ENCODE measurements at regions of chr14 and their contacts with region 1.

Region 1: GRCh38 chr14:58637391-58638230 is at the start of gene DACT1:
- DNase-seq: peak; percentile 87 to 93
- ATAC-seq: peak; percentile 85
- H3K4me3 ChIP-seq: peak within 1 kb of the TSS; percentile 75 to 93
- H3K27ac ChIP-seq: peak within 1 kb of the TSS; percentile 96 to 100
- H3K4me1 ChIP-seq: peaks cover 3% of the 10 kb centered on the region in 2 donors
- H3K27me3 ChIP-seq: no peaks in the 10 kb centered on the region
- total RNA-seq, gene DACT1: 33.6 to 43.6 TPM

Region 2: DNA sequence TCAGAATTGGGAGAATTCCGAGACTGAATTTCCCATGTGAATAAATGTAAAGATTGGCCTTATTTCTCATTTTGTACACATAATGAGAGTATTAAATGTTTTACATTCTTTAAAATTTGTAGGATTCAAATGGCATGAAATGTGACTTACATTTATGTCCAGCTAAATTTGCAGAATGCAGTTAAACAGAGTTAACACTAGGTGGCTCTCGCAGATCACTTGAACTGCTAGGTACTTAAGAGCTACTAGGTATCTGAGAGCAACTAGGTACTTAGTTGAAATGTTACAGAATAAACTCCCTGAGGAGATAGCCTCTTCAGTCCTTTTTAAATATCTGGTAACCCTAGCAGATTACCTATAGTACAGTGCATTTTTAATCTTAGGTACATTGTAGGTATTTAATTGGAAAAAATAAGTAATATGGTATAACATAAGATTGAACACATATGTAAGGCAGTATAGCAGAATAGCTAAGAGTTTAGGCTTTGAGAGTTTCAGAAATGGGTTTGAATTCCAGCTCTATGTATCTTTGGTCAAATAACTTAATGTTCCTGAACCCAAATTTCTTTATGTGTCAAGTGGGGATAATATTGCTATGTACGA is 136.3 kb before region 1 on chr14:
- intact Hi-C with region 1: loop called (anchors 5 kb)
- DNase-seq: no peak
- ATAC-seq: no peak
- H3K4me3 ChIP-seq: no peak overlapping the region
- H3K27ac ChIP-seq: no peak overlapping the region
- H3K4me1 ChIP-seq: no peaks in the 10 kb centered on the region
- H3K27me3 ChIP-seq: no peaks in the 10 kb centered on the region

Region 3: GRCh38 chr14:58540749-58541632 is 96.6 kb before region 1 on chr14:
- intact Hi-C with region 1: loop called (anchors 2 to 10 kb)
- DNase-seq: no peak
- ATAC-seq: no peak
- H3K4me3 ChIP-seq: no peak overlapping the region
- H3K27ac ChIP-seq: peak overlapping the region in 1 of 2 donors; percentile 84
- H3K4me1 ChIP-seq: peaks cover 0 to 1% of the 10 kb centered on the region in 2 donors
- H3K27me3 ChIP-seq: no peaks in the 10 kb centered on the region

Region 4: DNA sequence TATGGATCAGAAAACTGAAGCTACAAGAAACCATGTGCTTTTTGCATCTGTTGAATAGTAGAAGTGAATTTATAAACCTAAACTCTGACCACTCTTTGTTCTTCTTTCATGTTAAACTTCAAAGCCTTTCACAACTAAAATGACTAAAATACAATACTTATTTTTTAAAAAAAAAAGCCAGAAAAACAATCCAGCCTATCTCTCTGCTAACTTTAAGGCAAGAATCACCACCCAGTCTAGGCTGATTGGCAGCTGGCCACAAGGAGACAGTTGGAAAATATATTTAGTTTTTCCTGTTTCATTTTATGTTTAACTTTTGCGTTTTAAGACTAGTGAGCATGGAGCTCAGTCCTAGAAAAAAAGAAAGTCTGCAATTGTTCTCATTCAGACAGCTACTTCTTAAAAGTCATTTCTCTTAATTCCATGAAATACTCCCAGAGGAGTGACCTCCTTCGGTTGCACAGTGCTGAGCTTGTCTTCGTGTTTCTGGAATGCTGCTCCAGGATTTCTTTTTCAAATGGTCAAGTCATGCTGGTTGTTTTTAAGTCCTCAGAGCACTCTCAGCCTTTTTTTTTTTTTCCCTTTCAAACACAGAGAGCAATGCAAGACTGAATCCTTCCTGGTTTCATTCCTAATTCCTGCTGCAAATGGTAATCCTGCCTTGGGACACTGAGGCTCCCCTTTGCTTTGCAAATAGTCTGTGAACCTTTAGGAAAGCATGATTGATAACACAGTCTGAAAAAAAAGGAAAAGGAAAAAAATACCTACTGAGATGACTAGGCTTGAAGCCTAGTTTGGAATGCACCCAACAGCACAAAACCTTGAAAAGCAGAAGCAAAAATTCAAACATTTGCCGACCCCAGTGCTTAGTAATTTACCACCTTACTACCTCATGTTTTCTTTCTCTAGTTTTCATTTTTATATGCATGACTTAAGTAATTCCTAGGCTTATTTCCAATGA is 317.6 kb after region 1 on chr14:
- intact Hi-C with region 1: loop called in 1 of 2 experiments (anchors 5 kb)
- DNase-seq: no peak
- ATAC-seq: peak; percentile 50
- H3K4me3 ChIP-seq: no peak overlapping the region
- H3K27ac ChIP-seq: no peak overlapping the region
- H3K4me1 ChIP-seq: peaks cover 0 to 3% of the 10 kb centered on the region in 2 donors
- H3K27me3 ChIP-seq: no peaks in the 10 kb centered on the region

Region 5: DNA sequence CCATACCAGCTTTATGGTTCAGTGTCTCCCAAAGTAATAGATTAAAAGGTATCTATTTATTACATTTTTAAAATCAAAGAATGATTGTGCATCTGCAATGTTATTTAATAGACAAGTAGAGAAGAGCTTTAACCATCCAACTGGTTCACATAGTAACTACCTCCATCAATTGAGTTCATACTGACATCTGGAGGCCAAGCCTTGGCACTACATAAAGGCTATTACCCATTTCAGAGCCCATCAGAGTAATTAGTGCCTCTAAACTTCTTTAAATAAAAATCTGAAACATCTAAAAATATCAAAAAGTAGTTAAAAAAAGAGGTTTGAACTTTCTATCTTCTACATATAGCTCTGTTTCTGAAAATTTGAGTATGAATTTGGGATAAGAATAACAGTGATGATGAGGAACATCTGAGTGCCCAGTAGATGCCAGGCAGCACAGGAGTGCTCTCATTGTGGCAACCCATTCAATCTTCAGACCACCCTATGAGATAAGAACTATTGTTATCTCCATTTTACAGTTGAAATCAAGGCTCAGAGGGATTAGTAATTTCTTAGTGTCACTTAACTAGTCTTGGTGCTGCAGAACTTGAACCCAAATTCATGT is 417.9 kb after region 1 on chr14:
- intact Hi-C with region 1: loop called in 1 of 2 experiments (anchors 10 kb)
- DNase-seq: no peak
- ATAC-seq: peak; percentile 78
- H3K4me3 ChIP-seq: no peak overlapping the region
- H3K27ac ChIP-seq: no peak overlapping the region
- H3K4me1 ChIP-seq: no peaks in the 10 kb centered on the region
- H3K27me3 ChIP-seq: no peaks in the 10 kb centered on the region

Region 6: GRCh38 chr14:59333668-59334067 is 696.1 kb after region 1 on chr14:
- intact Hi-C with region 1: loop called in 1 of 2 experiments (anchors 10 kb)
- DNase-seq: no peak
- ATAC-seq: peak; percentile 90
- H3K4me3 ChIP-seq: no peak overlapping the region
- H3K27ac ChIP-seq: peak overlapping the region in 1 of 2 donors; percentile 95
- H3K4me1 ChIP-seq: peaks cover 4 to 12% of the 10 kb centered on the region in 2 donors
- H3K27me3 ChIP-seq: no peaks in the 10 kb centered on the region